ENCODE measurements at regions of chr20 and their contacts with region 1.

Region 1: GRCh38 chr20:39112178-39112743 is 150.1 kb downstream of the DHX35 start:
- DNase-seq: peak; percentile 91
- H3K4me3 ChIP-seq: peak overlapping the region in 1 of 2 experiments; percentile 24; a peak in 1 of 4 replicates
- H3K27ac ChIP-seq: no peak overlapping the region
- H3K4me1 ChIP-seq: peaks cover 0 to 4% of the 10 kb centered on the region in 2 experiments; a peak in 1 of 4 replicates
- H3K27me3 ChIP-seq: peaks cover 5% of the 10 kb centered on the region; the same call in 1 of the 2 replicates
- CTCF ChIP-seq: peak; percentile 56
- EP300 ChIP-seq: no peak
- RAD21 ChIP-seq: peak; percentile 94

Region 2: GRCh38 chr20:38766071-38766470 is 346.2 kb before region 1 on chr20:
- CTCF ChIA-PET with region 1: no interaction called
- POLR2A ChIA-PET with region 1: no interaction called
- DNase-seq: no peak
- H3K4me3 ChIP-seq: no peak overlapping the region
- H3K27ac ChIP-seq: no peak overlapping the region
- H3K4me1 ChIP-seq: peaks cover 0 to 9% of the 10 kb centered on the region in 2 experiments; a peak in 1 of 4 replicates
- H3K27me3 ChIP-seq: no peaks in the 10 kb centered on the region
- CTCF ChIP-seq: no peak
- EP300 ChIP-seq: no peak
- RAD21 ChIP-seq: no peak

Region 3: DNA sequence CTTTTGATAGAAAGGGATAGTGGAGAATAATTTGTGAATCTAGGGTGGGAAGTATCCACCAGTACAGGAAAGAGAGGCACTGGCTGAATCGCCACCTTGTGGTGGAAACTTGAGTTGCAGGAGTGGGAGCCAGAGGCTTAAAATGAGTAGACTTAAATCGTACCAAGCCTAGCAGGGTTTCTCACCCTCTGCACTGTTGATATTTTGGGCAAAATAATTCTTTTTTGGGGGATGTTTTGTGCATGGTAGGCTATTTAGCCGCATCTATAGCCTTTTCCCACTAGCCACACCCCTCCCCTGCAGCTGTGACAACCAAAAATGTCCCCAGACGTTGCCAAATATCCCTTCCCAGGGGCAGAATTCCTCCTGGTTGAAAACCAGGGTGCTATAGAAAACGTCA is 31.0 kb before region 1 on chr20:
- CTCF ChIA-PET with region 1: interaction called, 10 read pairs
- POLR2A ChIA-PET with region 1: no interaction called
- DNase-seq: peak; percentile 85
- H3K4me3 ChIP-seq: no peak overlapping the region; a peak in 1 of 4 replicates
- H3K27ac ChIP-seq: no peak overlapping the region
- H3K4me1 ChIP-seq: no peaks in the 10 kb centered on the region
- H3K27me3 ChIP-seq: peaks cover 11% of the 10 kb centered on the region; the same call in 1 of the 2 replicates
- CTCF ChIP-seq: peak; percentile 88
- EP300 ChIP-seq: no peak
- RAD21 ChIP-seq: peak; percentile 73

Region 4: GRCh38 chr20:39124064-39124463 is 11.8 kb after region 1 on chr20:
- CTCF ChIA-PET with region 1: interaction called, 30 read pairs
- POLR2A ChIA-PET with region 1: no interaction called
- DNase-seq: no peak
- H3K4me3 ChIP-seq: no peak overlapping the region
- H3K27ac ChIP-seq: no peak overlapping the region
- H3K4me1 ChIP-seq: no peaks in the 10 kb centered on the region
- H3K27me3 ChIP-seq: no peaks in the 10 kb centered on the region
- CTCF ChIP-seq: no peak
- EP300 ChIP-seq: no peak
- RAD21 ChIP-seq: no peak

Region 5: DNA sequence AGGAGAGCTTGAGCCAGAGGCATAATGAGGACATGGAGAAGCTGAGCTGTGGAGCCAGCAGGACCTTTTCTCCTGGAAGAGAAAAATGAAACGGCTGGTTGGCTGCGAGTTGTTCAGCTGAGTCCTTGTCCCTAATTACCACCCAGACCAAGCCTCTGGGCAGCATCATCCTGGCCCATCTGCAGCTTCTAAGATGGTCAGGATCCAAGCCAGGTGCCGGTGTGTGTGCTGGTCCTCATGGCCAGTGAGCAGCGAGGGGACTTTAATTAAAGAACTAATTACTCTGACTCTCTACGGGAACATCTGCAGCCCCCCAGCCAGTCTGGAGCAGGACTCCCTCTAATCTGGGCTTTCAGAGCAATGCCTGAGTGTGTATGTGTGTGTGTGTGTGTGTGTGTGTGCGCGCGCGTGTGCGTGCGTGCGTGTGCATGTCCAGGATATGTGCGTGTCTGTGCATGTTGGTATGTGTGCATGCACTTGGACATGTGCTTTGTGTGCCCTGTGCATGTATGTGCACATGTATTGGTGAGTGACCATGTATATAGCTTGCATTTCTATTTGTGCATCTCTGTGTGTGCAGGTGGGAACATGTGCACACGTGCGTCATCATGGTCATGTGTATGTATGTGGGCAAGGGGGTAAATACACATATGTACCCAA is 23.8 kb after region 1 on chr20:
- CTCF ChIA-PET with region 1: interaction called, 17 read pairs
- POLR2A ChIA-PET with region 1: no interaction called
- DNase-seq: no peak
- H3K4me3 ChIP-seq: no peak overlapping the region
- H3K27ac ChIP-seq: no peak overlapping the region
- H3K4me1 ChIP-seq: no peaks in the 10 kb centered on the region; a peak in 1 of 4 replicates
- H3K27me3 ChIP-seq: no peaks in the 10 kb centered on the region
- CTCF ChIP-seq: no peak
- EP300 ChIP-seq: no peak
- RAD21 ChIP-seq: no peak

Region 6: GRCh38 chr20:39264506-39265172 is 152.4 kb after region 1 on chr20:
- CTCF ChIA-PET with region 1: interaction called, 119 read pairs
- POLR2A ChIA-PET with region 1: no interaction called
- DNase-seq: peak; percentile 64
- H3K4me3 ChIP-seq: no peak overlapping the region; a peak in 1 of 4 replicates
- H3K27ac ChIP-seq: no peak overlapping the region
- H3K4me1 ChIP-seq: peaks cover 0 to 11% of the 10 kb centered on the region in 2 experiments; a peak in 1 of 4 replicates
- H3K27me3 ChIP-seq: no peaks in the 10 kb centered on the region
- CTCF ChIP-seq: peak; percentile 83
- EP300 ChIP-seq: no peak
- RAD21 ChIP-seq: peak; percentile 67

Region 7: GRCh38 chr20:39874049-39874888 is 762.0 kb after region 1 on chr20:
- CTCF ChIA-PET with region 1: interaction called, 25 read pairs
- POLR2A ChIA-PET with region 1: no interaction called
- DNase-seq: peak; percentile 53
- H3K4me3 ChIP-seq: peak overlapping the region in 1 of 2 experiments; percentile 9; a peak in 1 of 4 replicates
- H3K27ac ChIP-seq: no peak overlapping the region
- H3K4me1 ChIP-seq: peaks cover 0 to 12% of the 10 kb centered on the region in 2 experiments; a peak in 2 of 4 replicates
- H3K27me3 ChIP-seq: no peaks in the 10 kb centered on the region
- CTCF ChIP-seq: peak; percentile 75
- EP300 ChIP-seq: no peak
- RAD21 ChIP-seq: peak; percentile 92

Measured in SK-N-SH (cell line).